Posterior vena cava (tissue), 2 donors: ENCODE measurements at regions of chr3 and their contacts with region 1.

Region 1: DNA sequence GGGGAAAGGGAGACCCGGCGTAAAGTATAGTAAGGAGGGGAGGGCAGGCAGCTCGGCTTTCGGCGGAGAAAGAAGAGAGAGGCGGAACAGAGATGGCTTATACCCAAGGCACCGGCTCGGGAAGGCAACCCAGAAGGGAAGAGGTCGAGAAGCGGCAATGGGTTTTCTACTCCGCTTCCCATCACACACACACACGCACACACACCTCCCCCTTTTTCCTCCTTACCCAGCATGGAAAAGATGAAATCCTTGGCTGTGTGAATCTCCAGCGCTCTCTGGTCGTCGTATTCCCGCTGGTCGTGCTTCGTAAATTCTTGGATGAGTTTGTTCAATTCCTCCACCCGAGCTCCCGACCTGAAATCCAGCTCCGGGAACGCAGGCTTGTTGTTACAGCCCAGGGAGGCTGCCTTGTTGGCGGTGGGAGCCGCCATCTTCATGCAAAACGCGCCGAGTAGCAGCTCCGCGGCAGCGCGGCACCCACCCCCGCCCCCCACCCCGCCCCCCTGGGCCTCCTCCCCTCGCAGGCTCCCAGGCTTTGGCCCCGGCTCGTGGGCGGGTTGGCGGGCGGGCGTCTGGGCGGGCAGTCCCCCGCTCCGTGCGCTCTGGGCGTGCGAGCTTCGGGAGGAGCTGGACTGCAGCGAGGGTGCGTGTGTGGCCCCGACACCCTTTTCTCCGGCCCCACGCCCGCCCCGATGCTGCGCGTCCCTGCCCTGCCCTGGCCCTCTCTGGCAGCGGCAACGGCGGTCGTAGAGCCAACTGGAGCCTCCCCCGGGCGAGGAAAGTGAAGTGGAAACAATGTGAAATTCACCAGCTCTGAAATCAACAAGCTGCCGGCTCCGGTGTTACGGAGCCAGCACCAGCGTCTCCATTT is at the start of gene MB21D2:
- DNase-seq: peak; percentile 95
- total RNA-seq, gene MB21D2: 5.2 to 6.3 TPM

Region 2: GRCh38 chr3:192825657-192826200 is 91.9 kb before region 1 on chr3:
- intact Hi-C with region 1: loop called (anchors 5 to 10 kb)
- DNase-seq: no peak

Region 3: GRCh38 chr3:192844836-192845525 is 72.7 kb before region 1 on chr3:
- intact Hi-C with region 1: no loop called
- DNase-seq: no peak

Region 4: GRCh38 chr3:193592944-193593667 is 675.5 kb after region 1 on chr3 and contains the start of gene OPA1:
- intact Hi-C with region 1: loop called in 1 of 2 experiments (anchors 10 kb)
- DNase-seq: peak; percentile 100
- total RNA-seq, gene OPA1: 54.8 to 65.3 TPM